SK-N-SH (cell line): ENCODE measurements at regions of chr14 and their contacts with region 1.

Region 1: DNA sequence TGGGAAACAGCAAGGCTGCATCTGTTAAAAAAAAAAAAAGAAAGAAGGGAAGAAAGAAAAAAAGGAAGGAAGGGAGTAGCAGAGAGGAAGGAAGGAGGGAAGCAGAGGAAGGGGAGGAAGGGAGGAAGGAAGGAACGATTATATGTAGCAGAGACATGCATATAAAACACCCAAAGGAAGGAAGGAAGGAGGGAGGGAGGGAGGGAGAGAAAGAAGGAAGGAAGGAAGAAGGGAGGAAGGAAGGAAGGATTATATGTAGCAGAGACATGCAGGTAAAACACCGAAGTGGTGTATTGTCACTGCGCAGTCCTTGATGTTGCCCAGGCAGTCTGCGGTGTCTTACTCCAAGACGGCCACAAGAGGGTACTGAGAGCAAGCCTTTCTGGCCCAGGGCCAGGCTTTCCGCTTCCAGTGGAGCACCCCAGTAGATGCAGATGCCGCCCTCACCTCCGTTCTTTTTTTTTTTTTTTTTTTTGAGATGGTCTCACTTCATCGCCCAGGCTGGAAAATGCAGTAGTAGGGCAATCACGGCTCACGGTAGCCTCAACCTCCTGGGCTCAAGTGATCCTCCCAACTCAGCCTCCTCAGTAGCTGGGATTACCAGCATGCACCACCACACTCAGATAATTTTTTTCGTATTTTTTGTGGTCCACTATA is 5.8 kb upstream of the LBHD2 start:
- DNase-seq: peak; percentile 86
- H3K4me3 ChIP-seq: no peak overlapping the region
- H3K27ac ChIP-seq: no peak overlapping the region
- H3K4me1 ChIP-seq: peaks cover 0 to 5% of the 10 kb centered on the region in 2 experiments; a peak in 1 of 4 replicates
- H3K27me3 ChIP-seq: no peaks in the 10 kb centered on the region
- CTCF ChIP-seq: peak; percentile 70
- EP300 ChIP-seq: no peak
- RAD21 ChIP-seq: peak; percentile 79

Region 2: DNA sequence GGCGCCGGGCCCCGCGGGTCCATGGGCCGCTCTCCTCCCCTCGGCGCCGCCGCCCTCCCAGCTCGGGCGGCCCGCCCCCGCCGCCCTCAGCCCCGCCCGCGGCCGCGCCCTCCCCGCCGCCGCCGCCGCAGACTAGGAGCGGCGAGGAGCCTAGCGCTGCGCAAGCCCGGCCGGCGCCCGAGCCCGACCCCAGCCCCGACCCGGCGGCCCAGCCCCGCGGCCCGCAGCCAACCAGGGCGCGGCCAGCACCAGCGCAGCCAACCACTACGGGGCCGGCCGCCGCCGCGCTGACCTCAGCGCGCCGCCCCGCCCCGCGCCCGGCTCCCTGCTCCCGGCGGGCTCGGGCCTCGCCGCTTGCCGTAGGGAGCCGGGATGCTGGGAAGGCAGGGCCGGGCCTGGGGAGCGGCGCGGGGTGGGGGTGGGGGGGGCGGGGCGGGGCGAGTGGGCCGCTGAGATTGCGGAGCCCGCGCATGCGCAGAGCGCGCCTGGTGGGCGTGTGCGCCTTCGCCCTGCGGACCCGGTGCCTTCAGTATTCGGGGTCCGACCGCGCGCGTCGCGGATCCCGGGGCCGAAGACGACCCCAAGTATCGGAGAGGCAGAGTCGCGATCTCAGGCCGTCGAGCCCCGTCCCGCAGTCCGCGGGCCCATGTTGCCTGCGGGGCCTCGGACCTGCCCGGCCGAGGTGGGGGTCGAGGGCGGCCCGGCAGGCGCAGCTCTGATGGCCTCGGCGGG is 20.7 kb before region 1 on chr14 and contains the start of gene CDC42BPB:
- CTCF ChIA-PET with region 1: interaction called, 18 read pairs
- POLR2A ChIA-PET with region 1: no interaction called
- DNase-seq: peak; percentile 98
- H3K4me3 ChIP-seq: peak within 1 kb of the TSS; percentile 91 to 99
- H3K27ac ChIP-seq: peak within 1 kb of the TSS; percentile 75 to 89
- H3K4me1 ChIP-seq: peaks cover 23 to 26% of the 10 kb centered on the region in 2 experiments; a peak in 3 of 4 replicates
- H3K27me3 ChIP-seq: no peaks in the 10 kb centered on the region
- CTCF ChIP-seq: no peak
- EP300 ChIP-seq: no peak
- RAD21 ChIP-seq: no peak
- polyA plus RNA-seq, gene CDC42BPB: 59.7 and 61.6 TPM in 2 replicates

Region 3: GRCh38 chr14:103066399-103066798 is 11.8 kb before region 1 on chr14:
- CTCF ChIA-PET with region 1: interaction called, 12 read pairs
- POLR2A ChIA-PET with region 1: no interaction called
- DNase-seq: no peak
- H3K4me3 ChIP-seq: no peak overlapping the region
- H3K27ac ChIP-seq: no peak overlapping the region
- H3K4me1 ChIP-seq: no peaks in the 10 kb centered on the region
- H3K27me3 ChIP-seq: no peaks in the 10 kb centered on the region
- CTCF ChIP-seq: no peak
- EP300 ChIP-seq: no peak
- RAD21 ChIP-seq: no peak

Region 4: DNA sequence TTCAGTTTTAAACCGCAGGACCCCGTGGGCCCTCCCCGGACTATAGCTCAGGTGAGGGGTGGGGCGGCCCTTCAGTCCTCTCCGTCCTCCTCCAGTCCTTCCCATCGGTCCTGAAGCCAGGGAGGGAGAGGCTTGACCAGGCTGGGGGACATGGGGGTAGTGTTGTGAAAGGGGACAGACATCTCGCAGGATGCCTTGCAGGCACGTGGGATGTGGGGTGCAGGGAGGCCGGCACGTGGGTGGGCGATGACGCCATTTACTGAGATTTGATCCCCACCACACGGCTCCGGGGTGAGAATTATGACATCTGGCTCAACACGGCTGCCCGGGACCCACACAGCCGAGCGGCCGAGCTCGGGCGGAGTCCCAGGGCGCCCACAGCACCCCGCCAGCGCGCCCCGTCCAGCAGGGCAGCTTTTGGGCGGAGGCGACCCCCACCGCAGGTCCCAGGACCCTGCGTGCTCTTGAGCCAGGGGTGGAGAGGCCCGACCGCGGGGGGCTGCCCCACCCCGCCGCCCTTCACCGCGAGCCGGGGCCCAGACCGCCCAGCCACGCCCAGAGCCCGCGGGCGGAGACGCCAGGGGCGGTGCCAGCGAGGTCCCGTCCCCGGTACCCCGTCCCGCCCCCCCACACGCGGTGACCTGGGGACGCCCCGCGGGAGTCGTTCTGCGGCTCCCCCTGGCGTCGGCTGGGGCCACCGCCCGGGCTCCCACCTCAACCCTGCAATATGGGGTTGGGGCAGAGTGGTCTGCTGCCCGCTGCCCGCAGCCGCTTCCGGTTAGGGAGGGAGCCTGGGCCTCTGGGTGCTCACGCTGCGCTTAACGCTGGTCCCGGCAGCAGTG is 13.0 kb after region 1 on chr14:
- CTCF ChIA-PET with region 1: interaction called, 14 read pairs
- POLR2A ChIA-PET with region 1: no interaction called
- DNase-seq: peak; percentile 94
- H3K4me3 ChIP-seq: peak overlapping the region in 1 of 2 experiments; percentile 33; a peak in 2 of 4 replicates
- H3K27ac ChIP-seq: no peak overlapping the region
- H3K4me1 ChIP-seq: peaks cover 0 to 4% of the 10 kb centered on the region in 2 experiments; a peak in 1 of 4 replicates
- H3K27me3 ChIP-seq: no peaks in the 10 kb centered on the region
- CTCF ChIP-seq: peak; percentile 34; the same call in 1 of the 2 replicates
- EP300 ChIP-seq: no peak
- RAD21 ChIP-seq: peak; percentile 20; the same call in 1 of the 2 replicates